ENCODE measurements at regions of chr6 and their contacts with region 1.

Region 1: GRCh38 chr6:131694831-131695426 is 6.3 kb downstream of the OR2A4 start:
- DNase-seq: peak in 1 of 2 donors; percentile 42
- ATAC-seq: peak in 2 of 3 donors; percentile 47 to 71
- H3K4me3 ChIP-seq: no peak overlapping the region
- H3K4me3 Mint-ChIP-seq: no peak overlapping the region
- H3K27ac ChIP-seq: no peak overlapping the region
- H3K27ac Mint-ChIP-seq: no peak overlapping the region
- H3K4me1 ChIP-seq: no peaks in the 10 kb centered on the region
- H3K4me1 Mint-ChIP-seq: no peaks in the 10 kb centered on the region
- H3K27me3 ChIP-seq: no peaks in the 10 kb centered on the region
- H3K27me3 Mint-ChIP-seq: no peaks in the 10 kb centered on the region
- CTCF ChIP-seq: peak; percentile 39

Region 2: DNA sequence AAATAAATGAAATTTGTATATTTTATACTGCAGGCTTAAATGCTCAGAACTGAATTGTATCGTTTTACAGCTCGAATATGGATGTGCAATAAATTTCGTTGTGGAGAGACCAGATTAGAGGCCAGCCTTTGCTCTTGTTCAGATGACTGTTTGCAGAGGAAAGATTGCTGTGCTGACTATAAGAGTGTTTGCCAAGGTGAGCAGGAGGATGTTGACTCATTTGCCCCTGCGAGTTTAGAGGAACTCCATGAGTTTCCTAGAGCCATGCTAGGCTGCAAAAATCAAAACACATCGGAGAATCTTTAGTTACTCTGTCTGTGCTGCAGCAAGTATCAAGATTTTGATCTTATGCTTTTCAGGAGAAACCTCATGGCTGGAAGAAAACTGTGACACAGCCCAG is 42.5 kb before region 1 on chr6:
- intact Hi-C with region 1: no loop called
- DNase-seq: no peak
- ATAC-seq: no peak
- H3K4me3 ChIP-seq: no peak overlapping the region
- H3K4me3 Mint-ChIP-seq: no peak overlapping the region
- H3K27ac ChIP-seq: no peak overlapping the region
- H3K27ac Mint-ChIP-seq: no peak overlapping the region
- H3K4me1 ChIP-seq: no peaks in the 10 kb centered on the region
- H3K4me1 Mint-ChIP-seq: no peaks in the 10 kb centered on the region
- H3K27me3 ChIP-seq: no peaks in the 10 kb centered on the region
- H3K27me3 Mint-ChIP-seq: peaks cover 0 to 4% of the 10 kb centered on the region in 2 donors
- CTCF ChIP-seq: no peak

Region 3: GRCh38 chr6:131909408-131910218 is 214.7 kb after region 1 on chr6:
- intact Hi-C with region 1: loop called (anchors 2 kb)
- DNase-seq: peak; percentile 49 to 81
- ATAC-seq: peak; percentile 90 to 96 (median 92)
- H3K4me3 ChIP-seq: no peak overlapping the region
- H3K4me3 Mint-ChIP-seq: peak overlapping the region; percentile 49
- H3K27ac ChIP-seq: no peak overlapping the region
- H3K27ac Mint-ChIP-seq: peak overlapping the region; percentile 23 to 59
- H3K4me1 ChIP-seq: no peaks in the 10 kb centered on the region
- H3K4me1 Mint-ChIP-seq: peaks cover 8 to 9% of the 10 kb centered on the region in 2 donors
- H3K27me3 ChIP-seq: peaks cover 4% of the 10 kb centered on the region
- H3K27me3 Mint-ChIP-seq: peaks cover 21 to 53% of the 10 kb centered on the region in 2 donors
- CTCF ChIP-seq: peak; percentile 81